Endothelial cell of umbilical vein (primary cell): ENCODE measurements at regions of chr11 and their contacts with region 1.

Region 1: GRCh38 chr11:62542750-62543567 is 3.6 kb downstream of the AHNAK start:
- DNase-seq: peak; percentile 75
- H3K4me3 ChIP-seq: peak overlapping the region in 2 of 3 experiments; percentile 53 to 55
- H3K27ac ChIP-seq: peak overlapping the region; percentile 12
- H3K4me1 ChIP-seq: peaks cover 64% of the 10 kb centered on the region
- H3K27me3 ChIP-seq: no peaks in the 10 kb centered on the region
- CTCF ChIP-seq: peak; percentile 98 to 100
- POLR2A ChIP-seq: no peak

Region 2: GRCh38 chr11:62266558-62266957 is 276.4 kb before region 1 on chr11:
- CTCF ChIA-PET with region 1: no interaction called
- POLR2A ChIA-PET with region 1: no interaction called
- dilution Hi-C with region 1: no loop called
- intact Hi-C with region 1: no loop called
- DNase-seq: peak; percentile 67
- H3K4me3 ChIP-seq: no peak overlapping the region
- H3K27ac ChIP-seq: no peak overlapping the region
- H3K4me1 ChIP-seq: peaks cover 28% of the 10 kb centered on the region
- H3K27me3 ChIP-seq: peaks cover 4 to 7% of the 10 kb centered on the region in 2 experiments
- CTCF ChIP-seq: no peak
- POLR2A ChIP-seq: no peak

Region 3: DNA sequence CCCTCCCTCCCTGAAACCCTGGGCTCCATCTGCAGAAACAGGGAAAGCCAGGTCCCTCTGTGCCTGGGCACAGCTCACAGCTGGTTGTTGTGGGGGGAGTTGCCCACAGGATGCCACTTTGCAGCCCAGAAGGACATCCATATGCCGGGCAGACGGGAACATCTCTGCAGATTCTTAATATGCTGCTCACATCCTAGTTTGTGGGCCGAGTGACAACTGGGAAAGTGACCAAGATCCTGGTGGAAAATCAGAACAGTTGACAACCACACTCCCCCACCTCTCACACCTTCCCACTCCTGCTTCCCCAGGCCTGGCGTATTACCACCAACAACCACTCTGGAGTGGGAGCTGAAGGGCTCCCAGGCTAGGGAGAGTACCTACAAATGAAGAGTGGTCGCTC is 131.4 kb before region 1 on chr11:
- CTCF ChIA-PET with region 1: interaction called, 13 read pairs
- POLR2A ChIA-PET with region 1: no interaction called
- dilution Hi-C with region 1: no loop called
- intact Hi-C with region 1: no loop called
- DNase-seq: no peak
- H3K4me3 ChIP-seq: no peak overlapping the region
- H3K27ac ChIP-seq: no peak overlapping the region
- H3K4me1 ChIP-seq: no peaks in the 10 kb centered on the region
- H3K27me3 ChIP-seq: no peaks in the 10 kb centered on the region
- CTCF ChIP-seq: no peak
- POLR2A ChIP-seq: no peak

Region 4: GRCh38 chr11:62444236-62444833 is 98.6 kb before region 1 on chr11:
- CTCF ChIA-PET with region 1: interaction called, 17 read pairs
- POLR2A ChIA-PET with region 1: no interaction called
- dilution Hi-C with region 1: no loop called
- intact Hi-C with region 1: no loop called
- DNase-seq: peak; percentile 68
- H3K4me3 ChIP-seq: peak overlapping the region in 2 of 3 experiments; percentile 37 to 41
- H3K27ac ChIP-seq: no peak overlapping the region
- H3K4me1 ChIP-seq: peaks cover 11% of the 10 kb centered on the region
- H3K27me3 ChIP-seq: no peaks in the 10 kb centered on the region
- CTCF ChIP-seq: no peak
- POLR2A ChIP-seq: no peak

Region 5: GRCh38 chr11:62497132-62497915 is 45.6 kb before region 1 on chr11:
- CTCF ChIA-PET with region 1: interaction called, 29 read pairs
- POLR2A ChIA-PET with region 1: no interaction called
- dilution Hi-C with region 1: no loop called
- intact Hi-C with region 1: loop called (anchors 2 kb)
- DNase-seq: peak; percentile 68
- H3K4me3 ChIP-seq: no peak overlapping the region
- H3K27ac ChIP-seq: peak overlapping the region; percentile 58
- H3K4me1 ChIP-seq: peaks cover 25% of the 10 kb centered on the region
- H3K27me3 ChIP-seq: no peaks in the 10 kb centered on the region
- CTCF ChIP-seq: peak; percentile 27 to 33
- POLR2A ChIP-seq: no peak

Region 6: GRCh38 chr11:62556108-62556871 is 13.3 kb after region 1 on chr11:
- CTCF ChIA-PET with region 1: interaction called, 376 read pairs
- POLR2A ChIA-PET with region 1: interaction called, 7 read pairs
- dilution Hi-C with region 1: no loop called
- intact Hi-C with region 1: loop called (anchors 1 kb)
- DNase-seq: peak; percentile 94
- H3K4me3 ChIP-seq: peak overlapping the region in 1 of 3 experiments; percentile 6
- H3K27ac ChIP-seq: peak overlapping the region; percentile 56
- H3K4me1 ChIP-seq: peaks cover 75% of the 10 kb centered on the region
- H3K27me3 ChIP-seq: no peaks in the 10 kb centered on the region
- CTCF ChIP-seq: no peak
- POLR2A ChIP-seq: peak; percentile 80

Region 7: DNA sequence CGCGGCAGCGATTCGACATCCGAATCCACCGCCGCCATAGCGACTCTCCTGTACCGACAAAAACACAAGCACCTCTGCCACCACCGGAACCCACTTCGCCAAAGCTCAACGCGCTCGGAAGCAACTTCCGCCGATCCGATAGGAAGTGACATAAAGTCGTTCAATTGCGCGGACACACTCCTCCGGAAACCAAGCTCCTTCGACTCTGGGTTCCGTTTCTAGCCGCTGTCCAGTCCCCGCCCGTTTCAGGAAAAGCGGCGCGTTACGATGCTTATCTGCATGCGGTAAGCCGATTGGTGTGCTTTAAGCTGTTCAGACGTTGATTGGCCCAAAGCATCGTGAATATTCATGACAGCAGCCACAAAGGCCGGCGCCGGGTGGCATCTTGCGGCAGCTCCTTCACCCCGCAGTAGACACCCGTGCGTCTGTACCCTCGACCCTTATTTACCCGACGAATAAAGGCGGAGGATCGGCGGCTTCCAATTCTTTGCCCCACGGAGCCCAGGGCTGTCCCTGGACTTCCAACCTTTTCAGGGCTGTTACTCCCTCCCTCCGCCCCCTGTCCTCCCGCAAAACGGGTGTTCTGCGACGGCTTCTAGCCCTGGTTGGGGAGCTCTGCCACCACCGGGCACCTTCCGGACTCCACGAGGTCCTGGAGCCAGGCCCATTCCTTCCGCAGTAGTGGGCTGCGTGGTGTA is 48.6 kb after region 1 on chr11 and contains the start of gene TUT1:
- CTCF ChIA-PET with region 1: interaction called, 16 read pairs
- POLR2A ChIA-PET with region 1: no interaction called
- dilution Hi-C with region 1: no loop called
- intact Hi-C with region 1: no loop called
- DNase-seq: peak; percentile 99
- H3K4me3 ChIP-seq: peak within 1 kb of the TSS; percentile 67 to 87 (median 82)
- H3K27ac ChIP-seq: peak within 1 kb of the TSS; percentile 82
- H3K4me1 ChIP-seq: peaks cover 18% of the 10 kb centered on the region
- H3K27me3 ChIP-seq: no peaks in the 10 kb centered on the region
- CTCF ChIP-seq: no peak
- POLR2A ChIP-seq: peak; percentile 99
- total RNA-seq, gene TUT1: 16.9 and 17.8 TPM in 2 replicates

Region 8: DNA sequence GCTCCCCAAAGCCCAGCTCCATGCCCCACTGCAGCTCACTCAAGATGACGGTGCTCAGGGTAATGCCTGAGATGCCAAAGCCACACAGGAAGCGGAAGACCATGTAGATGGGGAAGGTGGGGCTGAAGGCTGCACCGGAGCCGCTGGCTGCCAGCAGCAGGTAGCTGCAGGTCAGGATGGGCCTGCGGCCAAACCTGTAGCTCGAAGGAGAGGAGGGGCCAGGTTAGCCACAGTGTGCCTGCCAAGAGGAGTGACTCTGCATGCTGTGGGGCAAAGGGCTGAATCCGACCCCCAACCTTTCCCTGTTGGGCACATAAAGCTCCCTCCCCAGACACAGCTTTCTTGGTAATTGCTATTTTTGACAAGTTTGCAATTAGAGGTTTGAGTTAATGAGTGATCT is 456.7 kb after region 1 on chr11:
- CTCF ChIA-PET with region 1: no interaction called
- POLR2A ChIA-PET with region 1: no interaction called
- dilution Hi-C with region 1: no loop called
- intact Hi-C with region 1: no loop called
- DNase-seq: no peak
- H3K4me3 ChIP-seq: no peak overlapping the region
- H3K27ac ChIP-seq: no peak overlapping the region
- H3K4me1 ChIP-seq: no peaks in the 10 kb centered on the region
- H3K27me3 ChIP-seq: peaks cover 0 to 6% of the 10 kb centered on the region in 2 experiments
- CTCF ChIP-seq: no peak
- POLR2A ChIP-seq: no peak